ENCODE measurements at regions of chr7 and their contacts with region 1.

Region 1: DNA sequence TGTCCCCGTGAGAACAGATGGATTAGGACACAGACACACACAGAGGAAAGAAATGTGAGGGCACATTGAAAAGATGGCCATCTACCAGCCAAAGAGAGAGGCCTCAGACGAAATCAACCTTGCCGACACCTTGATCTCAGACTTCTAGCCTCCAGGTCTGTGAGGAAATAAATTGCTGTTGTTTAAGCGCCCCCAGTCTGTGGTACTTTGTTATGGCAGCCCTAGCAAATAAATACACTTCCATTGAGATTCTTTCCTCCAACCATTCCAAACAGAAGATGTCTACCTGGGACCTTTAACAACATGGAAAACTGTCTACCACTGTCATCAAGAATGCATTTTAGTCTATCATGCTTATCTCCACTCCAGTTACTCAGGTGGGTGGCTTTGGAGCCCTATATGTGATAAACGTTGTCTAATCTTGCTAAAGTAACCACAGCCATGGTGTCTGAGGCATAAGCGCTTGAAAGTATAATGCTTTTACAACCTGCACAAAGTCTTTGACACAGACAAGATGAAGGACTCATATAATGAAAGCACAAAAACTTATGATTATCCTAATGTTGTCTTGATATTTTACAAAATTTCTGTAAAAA is 244.3 kb downstream of the MTERF1 start:
- DNase-seq: no peak
- H3K4me3 Mint-ChIP-seq: no peak overlapping the region
- H3K27ac Mint-ChIP-seq: no peak overlapping the region
- H3K4me1 Mint-ChIP-seq: no peaks in the 10 kb centered on the region
- H3K27me3 Mint-ChIP-seq: no peaks in the 10 kb centered on the region

Region 2: GRCh38 chr7:91050677-91051076 is 585.5 kb before region 1 on chr7:
- intact Hi-C with region 1: no loop called
- DNase-seq: peak; percentile 66
- H3K4me3 Mint-ChIP-seq: peak overlapping the region; percentile 64
- H3K27ac Mint-ChIP-seq: no peak overlapping the region
- H3K4me1 Mint-ChIP-seq: peaks cover 9% of the 10 kb centered on the region
- H3K27me3 Mint-ChIP-seq: peaks cover 2% of the 10 kb centered on the region

Region 3: GRCh38 chr7:91089382-91089963 is 546.8 kb before region 1 on chr7:
- intact Hi-C with region 1: loop called (anchors 5 kb)
- DNase-seq: peak; percentile 71
- H3K4me3 Mint-ChIP-seq: no peak overlapping the region
- H3K27ac Mint-ChIP-seq: no peak overlapping the region
- H3K4me1 Mint-ChIP-seq: peaks cover 12% of the 10 kb centered on the region
- H3K27me3 Mint-ChIP-seq: peaks cover 7% of the 10 kb centered on the region

Measured in activated CD4-positive, alpha-beta T cell treated with anti-CD3 and anti-CD28 coated beads, Interleukin-2, amount 10 ng/mL, durations not matched to agents 24 days and 14 days (primary cell).